ENCODE measurements at regions of chr6 and their contacts with region 1.

Region 1: GRCh38 chr6:10163200-10163962 is 251.5 kb downstream of the TFAP2A start:
- DNase-seq: peak; percentile 80 to 84
- H3K4me3 ChIP-seq: peak overlapping the region; percentile 54
- H3K27ac ChIP-seq: peak overlapping the region; percentile 72
- H3K4me1 ChIP-seq: peaks cover 26% of the 10 kb centered on the region
- H3K27me3 ChIP-seq: no peaks in the 10 kb centered on the region
- CTCF ChIP-seq: no peak

Region 2: DNA sequence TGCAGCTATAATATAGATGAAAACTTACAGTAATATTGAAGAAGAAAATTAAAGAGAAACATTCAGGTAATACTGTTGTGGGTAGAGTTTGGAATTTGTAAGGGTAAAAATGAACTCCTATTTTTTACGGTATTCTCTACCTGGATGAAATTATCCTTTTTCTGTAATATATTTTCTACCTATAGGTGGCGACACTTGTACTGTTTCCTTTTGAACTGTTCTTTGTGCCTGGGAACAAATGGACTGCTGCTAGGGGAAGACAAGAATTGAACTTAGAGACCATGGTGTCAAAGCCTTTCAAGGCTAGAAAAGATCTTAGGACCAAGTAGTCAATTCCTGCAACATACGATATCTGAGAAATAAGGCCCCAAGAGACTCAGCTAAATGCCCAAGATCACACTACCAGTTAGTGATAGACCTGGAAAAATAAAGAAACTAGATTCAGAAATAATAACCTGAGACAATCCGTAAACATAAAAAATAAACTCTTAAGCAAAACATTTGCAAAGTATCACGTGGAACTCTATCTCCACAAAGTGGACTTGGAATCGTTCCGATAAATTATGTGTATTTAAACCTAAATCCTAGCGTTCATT is 132.3 kb before region 1 on chr6:
- CTCF ChIA-PET with region 1: interaction called, 4 read pairs
- POLR2A ChIA-PET with region 1: interaction called, 7 read pairs
- intact Hi-C with region 1: loop called (anchors 1 kb)
- DNase-seq: no peak
- H3K4me3 ChIP-seq: no peak overlapping the region
- H3K27ac ChIP-seq: no peak overlapping the region
- H3K4me1 ChIP-seq: peaks cover 28% of the 10 kb centered on the region
- H3K27me3 ChIP-seq: no peaks in the 10 kb centered on the region
- CTCF ChIP-seq: peak; percentile 58

Region 3: GRCh38 chr6:10098756-10099528 is 64.4 kb before region 1 on chr6:
- CTCF ChIA-PET with region 1: no interaction called
- POLR2A ChIA-PET with region 1: no interaction called
- intact Hi-C with region 1: loop called (anchors 5 kb)
- DNase-seq: peak in 1 of 2 experiments; percentile 47
- H3K4me3 ChIP-seq: peak overlapping the region; percentile 24; the same call in 1 of the 2 replicates
- H3K27ac ChIP-seq: no peak overlapping the region
- H3K4me1 ChIP-seq: no peaks in the 10 kb centered on the region; the same call in 1 of the 2 replicates
- H3K27me3 ChIP-seq: no peaks in the 10 kb centered on the region
- CTCF ChIP-seq: no peak

Region 4: GRCh38 chr6:10237284-10238043 is 74.1 kb after region 1 on chr6:
- CTCF ChIA-PET with region 1: no interaction called
- POLR2A ChIA-PET with region 1: no interaction called
- intact Hi-C with region 1: loop called (anchors 5 kb)
- DNase-seq: peak; percentile 67 to 71
- H3K4me3 ChIP-seq: no peak overlapping the region
- H3K27ac ChIP-seq: no peak overlapping the region
- H3K4me1 ChIP-seq: no peaks in the 10 kb centered on the region; the same call in 1 of the 2 replicates
- H3K27me3 ChIP-seq: no peaks in the 10 kb centered on the region
- CTCF ChIP-seq: no peak

Region 5: GRCh38 chr6:10256113-10256690 is 92.8 kb after region 1 on chr6:
- CTCF ChIA-PET with region 1: no interaction called
- POLR2A ChIA-PET with region 1: no interaction called
- intact Hi-C with region 1: no loop called
- DNase-seq: no peak
- H3K4me3 ChIP-seq: no peak overlapping the region
- H3K27ac ChIP-seq: no peak overlapping the region
- H3K4me1 ChIP-seq: no peaks in the 10 kb centered on the region
- H3K27me3 ChIP-seq: no peaks in the 10 kb centered on the region
- CTCF ChIP-seq: peak; percentile 73